Mammary epithelial cell (primary cell): ENCODE measurements at regions of chr3 and their contacts with region 1.

Region 1: DNA sequence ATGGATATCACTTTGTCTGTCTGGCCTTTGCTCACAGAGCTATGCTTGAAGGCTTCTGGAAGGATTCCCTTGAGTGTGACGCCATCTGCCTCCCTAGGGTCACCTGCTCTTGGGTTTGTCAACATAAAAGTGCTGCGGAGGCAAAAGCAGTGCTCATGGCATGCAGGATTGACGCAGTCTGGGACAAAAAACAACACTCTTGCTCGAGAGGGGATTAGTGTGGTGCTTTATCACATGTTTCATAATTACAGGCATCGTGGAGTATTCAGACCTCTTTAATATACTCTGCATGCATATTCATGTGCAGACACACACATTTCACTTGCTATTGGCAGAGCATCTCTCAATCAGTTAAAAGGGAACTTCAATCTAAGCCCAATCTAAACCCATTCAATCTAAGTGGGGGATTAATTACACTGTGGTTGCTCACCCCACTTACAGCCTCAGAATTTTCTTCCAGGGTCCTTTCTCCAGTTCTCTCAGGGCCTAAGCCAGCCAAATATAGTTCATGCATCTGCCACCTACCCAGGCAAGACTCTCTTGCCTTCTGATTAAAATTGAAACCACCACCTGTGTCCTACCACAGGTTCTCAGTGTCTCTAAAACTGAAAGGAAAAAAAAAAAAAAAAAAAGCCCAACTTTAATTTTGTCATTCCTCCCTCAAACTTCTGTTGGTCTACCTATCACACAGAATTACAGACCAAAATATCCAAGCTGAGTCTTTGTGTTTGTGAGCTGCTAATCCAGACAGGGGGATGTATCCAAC is 75.6 kb downstream of the BFSP2 start:
- DNase-seq: no peak
- H3K4me3 ChIP-seq: no peak overlapping the region
- H3K27ac ChIP-seq: no peak overlapping the region
- H3K4me1 ChIP-seq: peaks cover 9% of the 10 kb centered on the region
- H3K27me3 ChIP-seq: no peaks in the 10 kb centered on the region
- CTCF ChIP-seq: no peak

Region 2: DNA sequence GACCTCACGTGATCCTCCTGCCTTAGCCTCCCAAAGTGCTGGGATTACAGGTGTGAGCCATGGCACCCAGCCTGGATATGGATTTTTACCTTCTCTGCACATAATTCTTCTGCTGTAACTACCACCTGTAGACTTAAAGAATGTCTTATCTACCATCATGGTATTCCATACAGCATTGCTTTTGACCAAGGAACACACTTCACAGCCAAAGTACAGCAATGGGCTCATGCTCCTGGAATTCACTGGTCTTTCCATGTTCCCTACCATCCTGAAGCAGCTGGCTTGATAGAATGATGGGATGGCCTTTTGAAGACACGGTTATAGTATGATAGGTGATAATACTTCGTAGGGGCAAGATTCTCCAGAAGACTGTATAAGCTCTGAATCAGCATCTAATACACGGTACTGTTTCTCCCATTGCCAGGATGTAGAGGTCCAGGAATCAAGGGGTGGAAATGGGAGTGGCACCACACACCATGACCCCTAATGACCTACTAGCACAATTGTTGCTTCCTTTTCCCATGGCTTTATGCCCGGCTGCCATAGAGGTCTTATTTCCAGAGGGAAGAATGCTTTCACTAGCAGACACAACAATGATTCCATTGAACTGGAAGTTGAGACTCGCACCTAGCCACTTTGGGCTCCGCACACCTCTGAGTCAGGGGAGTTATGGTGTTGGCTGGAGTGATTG is 37.1 kb after region 1 on chr3:
- CTCF ChIA-PET with region 1: no interaction called
- dilution Hi-C with region 1: no loop called
- in situ Hi-C with region 1: loop called in 1 of 2 experiments (anchors 5 kb)
- intact Hi-C with region 1: no loop called
- DNase-seq: no peak
- H3K4me3 ChIP-seq: no peak overlapping the region
- H3K27ac ChIP-seq: no peak overlapping the region
- H3K4me1 ChIP-seq: no peaks in the 10 kb centered on the region
- H3K27me3 ChIP-seq: no peaks in the 10 kb centered on the region
- CTCF ChIP-seq: no peak